ENCODE measurements at regions of chr17 and their contacts with region 1.

Region 1: GRCh38 chr17:42527273-42527703 is 8.8 kb upstream of the NAGLU start:
- DNase-seq: peak; percentile 82
- ATAC-seq: peak; percentile 74
- H3K4me3 ChIP-seq: no peak overlapping the region
- H3K27ac ChIP-seq: no peak overlapping the region
- H3K4me1 ChIP-seq: peaks cover 3% of the 10 kb centered on the region; the same call in 1 of the 2 replicates
- H3K27me3 ChIP-seq: no peaks in the 10 kb centered on the region
- CTCF ChIP-seq: peak; percentile 86

Region 2: DNA sequence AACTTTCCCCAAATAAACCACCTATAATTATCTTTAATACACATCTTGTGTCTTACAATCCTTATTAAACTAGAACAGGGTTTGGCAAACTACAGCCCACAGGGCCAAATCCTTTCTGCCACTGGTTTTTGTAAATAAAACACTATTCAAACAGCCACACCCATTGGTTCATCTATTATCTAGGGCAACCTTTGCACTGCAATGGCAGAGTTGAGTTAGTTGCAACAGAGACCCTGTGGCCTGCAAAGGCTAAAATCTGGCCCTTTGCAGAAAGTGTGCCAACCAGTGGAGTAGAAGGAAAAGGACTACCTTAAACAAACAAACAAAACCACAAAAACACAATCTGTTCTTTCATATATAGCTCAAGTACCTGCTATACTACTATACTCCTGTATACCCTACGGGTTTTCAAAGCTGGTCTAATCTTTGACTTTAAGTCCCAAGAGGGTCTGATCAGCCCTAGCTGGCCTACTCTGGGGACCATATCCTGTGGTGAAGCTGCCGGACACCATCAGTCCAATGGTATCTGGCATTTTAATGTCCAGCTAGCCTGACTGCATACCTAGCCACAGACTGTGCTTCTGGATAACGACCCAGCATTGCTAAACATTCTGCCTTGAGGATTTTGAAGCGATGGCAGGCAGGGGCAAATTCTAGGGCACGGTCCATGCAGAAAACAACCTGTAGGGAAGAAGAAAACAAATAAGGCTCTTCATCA is 537.4 kb before region 1 on chr17:
- CTCF ChIA-PET with region 1: interaction called, 12 read pairs
- POLR2A ChIA-PET with region 1: no interaction called
- intact Hi-C with region 1: no loop called
- DNase-seq: peak; percentile 43
- ATAC-seq: peak; percentile 64
- H3K4me3 ChIP-seq: no peak overlapping the region
- H3K27ac ChIP-seq: peak overlapping the region; percentile 29
- H3K4me1 ChIP-seq: peaks cover 13% of the 10 kb centered on the region
- H3K27me3 ChIP-seq: no peaks in the 10 kb centered on the region
- CTCF ChIP-seq: no peak

Region 3: DNA sequence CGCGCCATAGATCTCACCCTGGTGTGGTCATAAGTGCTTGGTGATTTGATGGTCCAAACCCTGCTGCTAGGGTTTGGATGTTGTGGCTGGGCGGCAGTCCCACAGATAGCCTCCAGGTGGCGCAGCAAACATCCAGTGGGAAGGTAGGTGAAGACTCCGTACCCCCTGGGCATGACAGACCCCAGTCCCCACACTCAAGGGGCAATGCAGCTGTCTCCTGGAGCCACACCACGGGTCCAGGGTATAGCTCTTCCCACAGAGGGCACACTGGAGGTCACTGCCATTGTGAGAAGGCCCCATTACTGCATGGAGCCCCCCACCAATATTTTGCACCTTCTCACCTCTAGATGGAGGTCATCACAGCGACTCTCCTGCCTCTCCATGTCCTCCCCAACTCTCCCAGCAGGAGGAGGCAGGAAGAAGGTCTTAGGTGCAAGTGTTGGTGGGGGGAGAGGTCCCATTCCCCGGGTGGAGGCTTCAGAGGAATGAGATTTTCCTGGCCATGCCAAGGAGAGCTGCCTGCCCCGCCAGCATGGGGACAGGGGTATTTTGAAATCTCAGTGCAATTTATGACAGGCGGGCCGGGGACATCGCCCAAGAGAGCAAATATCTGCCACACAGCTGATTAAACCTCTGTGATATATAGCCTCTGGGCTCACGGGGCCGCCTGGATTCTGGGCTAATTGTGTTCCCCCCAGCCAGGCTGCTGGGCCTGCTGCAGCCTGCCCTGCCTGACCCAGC is 459.8 kb before region 1 on chr17:
- CTCF ChIA-PET with region 1: interaction called, 6 read pairs
- POLR2A ChIA-PET with region 1: no interaction called
- intact Hi-C with region 1: loop called (anchors 1 kb)
- DNase-seq: peak; percentile 62
- ATAC-seq: peak; percentile 64
- H3K4me3 ChIP-seq: no peak overlapping the region
- H3K27ac ChIP-seq: no peak overlapping the region
- H3K4me1 ChIP-seq: no peaks in the 10 kb centered on the region
- H3K27me3 ChIP-seq: 0 out of 2 replicates have a peak, but pooled peaks cover 8% of the 10 kb centered on the region
- CTCF ChIP-seq: peak; percentile 87

Region 4: DNA sequence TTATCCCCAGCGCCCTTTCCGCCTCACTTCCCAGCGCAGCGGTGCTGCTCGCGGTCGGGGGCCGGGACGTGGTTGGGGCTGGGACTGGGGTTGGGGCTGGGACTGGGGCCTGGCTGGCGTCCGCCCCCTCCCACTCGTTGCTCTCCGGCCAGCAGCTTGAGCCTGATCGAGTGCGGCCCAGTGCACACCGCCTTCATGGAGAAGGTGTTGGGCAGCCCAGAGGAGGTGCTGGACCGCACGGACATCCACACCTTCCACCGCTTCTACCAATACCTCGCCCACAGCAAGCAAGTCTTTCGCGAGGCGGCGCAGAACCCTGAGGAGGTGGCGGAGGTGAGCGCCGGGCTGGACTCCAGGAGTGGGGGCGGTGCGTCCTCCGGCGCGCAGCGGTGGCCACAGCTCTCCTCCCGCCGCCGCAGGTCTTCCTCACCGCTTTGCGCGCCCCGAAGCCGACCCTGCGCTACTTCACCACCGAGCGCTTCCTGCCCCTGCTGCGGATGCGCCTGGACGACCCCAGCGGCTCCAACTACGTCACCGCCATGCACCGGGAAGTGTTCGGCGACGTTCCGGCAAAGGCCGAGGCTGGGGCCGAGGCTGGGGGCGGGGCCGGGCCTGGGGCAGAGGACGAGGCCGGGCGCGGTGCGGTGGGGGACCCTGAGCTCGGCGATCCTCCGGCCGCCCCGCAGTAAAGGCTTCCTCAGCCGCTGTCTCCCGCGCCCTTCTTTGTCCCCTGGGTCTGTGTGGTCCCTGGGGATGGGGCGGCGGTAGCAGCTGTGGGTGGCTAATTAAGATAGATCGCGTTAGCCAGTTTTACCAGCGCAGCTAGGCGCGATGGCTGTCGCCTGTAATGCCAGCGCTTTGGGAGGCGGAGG is 27.2 kb after region 1 on chr17:
- CTCF ChIA-PET with region 1: no interaction called
- POLR2A ChIA-PET with region 1: interaction called, 26 read pairs
- intact Hi-C with region 1: no loop called
- DNase-seq: peak; percentile 63
- ATAC-seq: peak; percentile 91
- H3K4me3 ChIP-seq: peak overlapping the region; percentile 89
- H3K27ac ChIP-seq: peak overlapping the region; percentile 3; the same call in 1 of the 2 replicates
- H3K4me1 ChIP-seq: 0 out of 2 replicates have a peak, but pooled peaks cover 4% of the 10 kb centered on the region
- H3K27me3 ChIP-seq: no peaks in the 10 kb centered on the region
- CTCF ChIP-seq: no peak

Measured in PC-3 (cell line).